ENCODE measurements at regions of chr19 and their contacts with region 1.

Region 1: DNA sequence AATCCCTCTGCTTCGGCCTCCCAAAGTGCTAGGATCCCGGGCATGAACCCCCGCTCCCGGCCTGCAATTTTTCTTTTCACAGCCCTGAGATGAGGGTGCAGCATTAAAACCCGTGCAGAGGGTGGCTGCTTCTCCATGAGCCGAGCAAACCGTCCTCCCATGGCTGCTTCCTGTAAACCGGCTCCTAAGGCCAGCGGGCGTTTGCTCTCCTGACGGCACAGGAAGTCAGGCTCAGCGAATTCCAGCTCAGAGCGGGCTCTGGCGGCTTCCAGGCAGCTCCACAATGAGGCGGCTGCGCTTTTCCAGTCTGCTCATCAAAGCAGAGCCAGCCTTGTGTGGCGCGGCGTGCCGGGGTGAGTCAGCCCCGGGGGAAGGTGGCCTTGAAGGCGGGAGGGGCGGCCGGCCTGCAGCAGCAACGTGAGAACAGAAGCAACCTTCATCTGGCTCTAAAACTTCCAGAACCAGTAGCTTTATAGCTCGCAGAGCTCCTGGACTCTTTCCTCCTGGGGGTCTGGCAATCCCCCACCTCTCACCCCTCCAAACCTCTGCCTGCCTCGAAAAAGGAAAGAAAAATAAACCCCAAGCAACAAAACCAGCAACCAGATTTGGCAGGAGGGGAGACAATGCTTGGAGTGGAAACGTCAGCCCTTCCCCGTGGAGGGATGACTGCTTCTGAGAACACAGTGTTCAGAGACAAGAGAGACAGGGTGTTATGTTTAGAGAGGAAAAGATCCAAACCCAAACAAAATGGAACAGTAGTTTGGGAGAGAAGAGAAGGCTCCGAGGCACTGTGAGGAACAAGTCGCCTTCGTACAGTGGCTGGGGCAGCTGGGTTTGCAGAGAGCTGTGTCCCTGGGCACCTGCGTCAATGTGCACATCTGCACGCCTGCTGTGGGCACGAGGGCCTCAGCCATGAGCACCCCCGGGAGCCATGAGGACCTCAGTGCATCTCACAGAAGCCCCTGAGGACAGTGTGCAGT is 67.8 kb downstream of the GADD45B start:
- DNase-seq: no peak
- ATAC-seq: peak; percentile 82
- H3K4me3 ChIP-seq: peak overlapping the region; percentile 53
- H3K27ac ChIP-seq: peak overlapping the region; percentile 64
- H3K4me1 ChIP-seq: peaks cover 35% of the 10 kb centered on the region
- H3K27me3 ChIP-seq: no peaks in the 10 kb centered on the region
- CTCF ChIP-seq: peak in 1 of 3 experiments; percentile 18; a peak in 1 of 6 replicates
- EP300 ChIP-seq: no peak
- POLR2A ChIP-seq: peak; percentile 41; the same call in 1 of the 2 replicates
- RAD21 ChIP-seq: 0 out of 2 replicates have a peak, but pooled peaks have one; percentile 3

Region 2: DNA sequence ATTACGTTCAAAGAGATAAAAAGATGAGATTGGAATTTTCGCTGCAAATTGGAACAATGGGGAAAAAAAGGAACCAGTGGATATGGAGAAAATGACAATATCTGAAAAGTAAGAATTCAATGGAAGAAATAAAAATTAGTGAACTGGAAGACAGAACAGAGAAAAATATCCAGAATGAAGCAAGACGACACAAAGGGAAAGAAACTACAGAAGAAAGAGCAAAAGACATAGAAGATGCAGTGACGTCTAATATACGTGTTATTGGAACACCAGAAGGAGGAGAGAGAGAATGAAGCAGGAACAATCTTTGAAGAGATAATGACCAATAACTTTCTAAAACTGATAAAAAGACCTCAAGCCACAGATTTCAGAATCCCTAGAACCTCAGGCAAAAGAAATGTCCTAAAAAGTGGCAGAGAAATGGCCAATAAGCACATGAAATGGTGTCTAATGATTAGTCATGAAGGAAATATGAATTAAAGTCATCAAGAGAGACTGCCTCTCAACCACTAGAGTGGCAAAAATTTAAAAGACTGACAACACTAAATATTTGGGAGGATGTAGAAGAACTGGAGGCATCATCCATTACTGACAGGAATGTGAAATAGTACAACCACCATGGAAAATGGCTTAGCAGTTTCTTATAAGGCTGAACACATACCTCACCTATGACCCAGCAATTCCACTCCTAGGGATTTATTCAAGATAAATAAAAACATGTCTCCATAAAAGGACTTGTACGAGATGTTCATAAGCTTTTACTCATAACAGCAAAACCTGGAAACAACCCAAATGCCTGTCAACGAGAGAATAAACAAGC is 11.3 kb before region 1 on chr19:
- CTCF ChIA-PET with region 1: interaction called, 7 read pairs
- POLR2A ChIA-PET with region 1: interaction called, 9 read pairs
- RAD21 ChIA-PET with region 1: interaction called, 16 read pairs
- SMC1A ChIA-PET with region 1: interaction called, 22 read pairs
- in situ Hi-C with region 1: no loop called
- intact Hi-C with region 1: no loop called
- DNase-seq: no peak
- ATAC-seq: no peak
- H3K4me3 ChIP-seq: no peak overlapping the region
- H3K27ac ChIP-seq: no peak overlapping the region
- H3K4me1 ChIP-seq: no peaks in the 10 kb centered on the region
- H3K27me3 ChIP-seq: no peaks in the 10 kb centered on the region
- CTCF ChIP-seq: no peak
- EP300 ChIP-seq: no peak
- POLR2A ChIP-seq: no peak
- RAD21 ChIP-seq: no peak

Region 3: GRCh38 chr19:2653710-2654707 is 110.3 kb after region 1 on chr19:
- CTCF ChIA-PET with region 1: no interaction called
- POLR2A ChIA-PET with region 1: no interaction called
- RAD21 ChIA-PET with region 1: no interaction called
- SMC1A ChIA-PET with region 1: no interaction called
- in situ Hi-C with region 1: no loop called
- intact Hi-C with region 1: no loop called
- DNase-seq: no peak
- ATAC-seq: no peak
- H3K4me3 ChIP-seq: no peak overlapping the region
- H3K27ac ChIP-seq: no peak overlapping the region; the same call in 1 of the 2 replicates
- H3K4me1 ChIP-seq: peaks cover 18% of the 10 kb centered on the region
- H3K27me3 ChIP-seq: no peaks in the 10 kb centered on the region
- CTCF ChIP-seq: no peak
- EP300 ChIP-seq: no peak
- POLR2A ChIP-seq: no peak
- RAD21 ChIP-seq: no peak

Measured in GM12878 (cell line).